Posterior vena cava (tissue), 2 donors: ENCODE measurements at regions of chr4 and their contacts with region 1.

Region 1: DNA sequence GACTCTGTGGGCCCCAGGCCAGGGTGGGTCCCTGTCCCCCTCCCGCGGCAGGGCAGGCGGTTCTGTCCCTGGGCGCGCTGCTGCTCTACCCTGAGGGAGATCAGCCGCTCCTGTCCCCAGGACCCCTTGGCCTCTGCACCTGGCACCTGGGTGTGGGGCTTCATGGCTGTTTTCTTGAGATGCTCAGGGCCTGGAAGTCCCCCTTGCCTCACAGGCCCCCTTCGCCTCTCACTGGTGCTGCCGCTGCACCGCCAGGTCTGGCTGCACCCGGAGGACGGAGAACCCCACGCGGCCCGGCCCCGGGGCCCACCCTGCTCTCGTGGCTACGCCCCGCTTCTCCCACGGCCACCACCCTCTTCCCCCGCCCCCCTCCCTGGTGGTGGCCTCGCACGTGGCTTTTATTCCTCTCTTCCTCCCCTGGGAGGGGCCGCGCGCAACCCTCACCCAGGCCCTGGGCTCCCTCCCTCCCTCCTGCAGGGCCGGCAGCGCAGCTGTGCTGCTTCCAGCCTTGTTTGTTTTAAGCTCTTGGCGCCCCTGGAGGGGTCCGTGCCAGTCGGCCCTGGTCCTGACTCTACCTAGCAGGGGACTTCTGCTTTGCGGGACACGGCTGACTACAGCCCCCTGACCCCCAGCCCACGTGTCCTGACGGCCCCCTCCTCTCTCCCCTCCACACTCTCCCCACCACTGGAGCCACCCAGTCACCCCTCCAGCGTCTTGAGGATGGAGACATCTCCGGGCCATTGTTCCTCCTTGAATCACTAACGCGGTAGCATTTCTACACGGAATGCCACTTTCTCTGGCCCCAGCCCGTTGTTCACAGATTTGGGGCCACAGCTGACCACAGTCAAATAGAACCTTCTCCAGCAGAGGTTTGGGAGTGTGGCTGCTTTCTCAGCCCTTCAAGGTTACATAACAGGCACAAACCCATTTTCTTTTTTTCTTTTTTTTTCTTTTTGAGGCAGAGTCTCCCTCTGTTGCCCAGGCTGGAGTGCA is 20.6 kb upstream of the CLDN24 start:
- DNase-seq: peak; percentile 76

Region 2: DNA sequence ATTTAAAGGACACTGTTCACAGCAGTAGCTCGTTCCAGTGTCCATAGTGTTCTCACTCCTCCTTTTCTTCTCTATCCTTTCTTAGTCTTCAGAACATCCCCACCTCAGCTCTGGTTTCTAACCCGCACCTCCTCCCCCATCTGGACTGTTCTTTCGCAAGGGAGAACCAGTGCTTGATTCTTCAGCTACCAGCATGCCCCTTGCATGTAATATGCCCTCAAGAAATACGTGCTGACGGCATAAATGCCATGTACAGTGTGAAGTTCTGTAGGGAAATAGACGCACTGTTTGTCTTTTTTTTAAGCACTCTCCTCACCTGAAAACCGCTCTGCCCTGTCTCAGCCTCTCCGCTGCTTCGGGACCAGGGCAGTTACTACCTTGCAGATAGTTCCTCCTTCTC is 28.0 kb before region 1 on chr4:
- intact Hi-C with region 1: loop called in 1 of 2 experiments (anchors 1 kb)
- DNase-seq: no peak